ENCODE measurements at regions of chrX and their contacts with region 1.

Region 1: DNA sequence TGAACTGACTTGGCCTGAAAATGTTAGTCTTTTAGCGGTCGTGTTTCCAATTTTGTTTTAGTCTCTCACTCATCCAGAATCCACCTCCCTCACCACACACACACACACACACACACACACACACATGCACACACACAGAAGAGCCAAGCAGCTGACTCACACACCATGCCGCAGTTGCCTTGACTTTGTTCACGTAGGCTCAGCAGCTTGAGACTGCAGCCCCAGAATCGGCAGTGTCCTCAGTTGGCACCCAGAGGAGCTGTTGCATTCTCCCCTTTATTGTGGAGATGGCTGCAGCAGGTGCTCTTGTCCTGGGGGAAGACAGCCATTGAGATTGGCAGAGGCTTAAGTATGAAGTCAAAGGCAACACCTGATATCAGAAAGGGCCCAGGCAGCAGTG is 20.9 kb upstream of the XPNPEP2 start:
- DNase-seq: no peak
- ATAC-seq: no peak
- H3K4me3 ChIP-seq: no peak overlapping the region
- H3K27ac ChIP-seq: no peak overlapping the region
- H3K4me1 ChIP-seq: no peaks in the 10 kb centered on the region
- H3K27me3 ChIP-seq: no peaks in the 10 kb centered on the region
- CTCF ChIP-seq: no peak

Region 2: DNA sequence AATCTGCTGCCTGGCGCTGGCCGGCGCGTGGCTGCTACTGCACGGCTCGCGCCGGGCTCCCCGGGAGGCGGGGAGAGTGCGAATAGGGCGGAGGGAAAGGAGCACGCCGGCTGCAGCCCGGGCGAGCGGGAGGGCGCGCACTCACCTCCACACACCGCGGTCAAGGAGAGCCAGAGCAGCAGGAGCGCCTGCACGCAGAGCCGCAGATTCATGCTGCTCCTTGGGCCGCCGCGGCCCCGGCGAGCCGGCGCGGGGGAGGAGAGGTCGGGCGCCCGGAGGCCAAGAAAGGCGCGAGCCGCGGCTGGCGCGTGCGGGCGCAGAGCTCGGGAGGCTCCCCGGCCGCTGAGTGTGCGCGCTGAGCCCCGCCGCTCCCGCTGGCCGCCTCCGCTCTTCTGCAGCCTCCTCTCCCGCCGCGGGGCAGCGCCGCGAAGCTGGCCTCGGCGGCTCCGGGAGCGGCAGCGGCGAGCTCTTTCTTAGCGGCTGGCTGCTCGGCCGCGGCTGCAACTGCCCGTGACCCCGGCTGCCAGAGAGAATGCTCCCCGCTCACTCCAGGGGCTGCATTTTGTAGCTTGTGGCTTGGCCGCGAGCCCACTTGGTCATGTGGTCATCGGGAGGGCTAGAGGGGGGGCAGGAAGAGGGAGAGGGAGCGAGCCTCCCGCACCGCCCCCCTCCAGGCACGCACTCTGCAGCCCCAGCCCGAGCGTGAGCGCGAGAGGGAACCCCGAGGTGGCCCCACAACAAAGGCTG is 63.3 kb before region 1 on chrX and contains the start of gene APLN:
- intact Hi-C with region 1: loop called (anchors 10 kb)
- DNase-seq: peak; percentile 51
- ATAC-seq: peak; percentile 75 to 78
- H3K4me3 ChIP-seq: peak within 1 kb of the TSS; percentile 52
- H3K27ac ChIP-seq: no peak within 1 kb of the TSS
- H3K4me1 ChIP-seq: peaks cover 6% of the 10 kb centered on the region
- H3K27me3 ChIP-seq: no peaks in the 10 kb centered on the region
- CTCF ChIP-seq: no peak
- total RNA-seq, gene APLN: 4.2 TPM

Measured in lower lobe of right lung (tissue), 2 donors.